ENCODE measurements at regions of chr9 and their contacts with region 1.

Region 1: GRCh38 chr9:21777701-21778100 is 24.7 kb upstream of the MTAP start:
- DNase-seq: no peak
- ATAC-seq: no peak
- H3K4me3 Mint-ChIP-seq: no peak overlapping the region
- H3K27ac Mint-ChIP-seq: no peak overlapping the region
- H3K4me1 Mint-ChIP-seq: peaks cover 3% of the 10 kb centered on the region
- H3K27me3 Mint-ChIP-seq: no peaks in the 10 kb centered on the region

Region 2: DNA sequence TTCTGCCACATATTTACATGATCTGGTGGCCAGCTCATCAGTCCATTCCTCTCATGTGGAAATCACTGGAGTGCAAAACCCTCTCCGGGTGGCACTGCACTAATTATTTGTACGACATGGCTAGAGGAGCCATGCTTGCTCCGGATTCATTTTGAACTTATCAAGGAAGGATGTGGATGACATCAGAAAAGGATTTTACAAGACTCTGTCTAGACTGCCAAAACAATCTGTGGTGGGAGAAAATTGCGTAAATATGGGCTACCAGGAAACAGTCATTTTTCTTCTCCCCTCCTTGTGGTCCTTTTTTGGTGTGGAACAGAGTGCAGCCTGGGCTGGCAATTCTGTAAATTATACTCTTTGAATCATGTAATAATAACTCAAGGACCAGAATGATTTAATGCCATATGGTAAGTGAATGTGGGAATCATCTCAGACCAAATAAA is 172.2 kb before region 1 on chr9:
- CTCF ChIA-PET with region 1: no interaction called
- POLR2A ChIA-PET with region 1: no interaction called
- intact Hi-C with region 1: no loop called
- DNase-seq: no peak
- ATAC-seq: no peak
- H3K4me3 Mint-ChIP-seq: no peak overlapping the region
- H3K27ac Mint-ChIP-seq: no peak overlapping the region
- H3K4me1 Mint-ChIP-seq: peaks cover 17% of the 10 kb centered on the region
- H3K27me3 Mint-ChIP-seq: no peaks in the 10 kb centered on the region

Region 3: GRCh38 chr9:21709464-21710058 is 68.1 kb before region 1 on chr9:
- CTCF ChIA-PET with region 1: interaction called, 10 read pairs
- POLR2A ChIA-PET with region 1: no interaction called
- intact Hi-C with region 1: no loop called
- DNase-seq: peak; percentile 79
- ATAC-seq: peak; percentile 53
- H3K4me3 Mint-ChIP-seq: no peak overlapping the region
- H3K27ac Mint-ChIP-seq: no peak overlapping the region
- H3K4me1 Mint-ChIP-seq: peaks cover 19% of the 10 kb centered on the region
- H3K27me3 Mint-ChIP-seq: peaks cover 2% of the 10 kb centered on the region

Region 4: GRCh38 chr9:22084336-22085035 is 306.8 kb after region 1 on chr9:
- CTCF ChIA-PET with region 1: no interaction called
- POLR2A ChIA-PET with region 1: no interaction called
- intact Hi-C with region 1: no loop called
- DNase-seq: no peak
- ATAC-seq: no peak
- H3K4me3 Mint-ChIP-seq: no peak overlapping the region
- H3K27ac Mint-ChIP-seq: no peak overlapping the region
- H3K4me1 Mint-ChIP-seq: peaks cover 11% of the 10 kb centered on the region
- H3K27me3 Mint-ChIP-seq: peaks cover 56% of the 10 kb centered on the region

Measured in activated CD4-positive, alpha-beta T cell treated with anti-CD3 and anti-CD28 coated beads for 36 hours (primary cell).